Right cardiac atrium (tissue), 5 donors: ENCODE measurements at regions of chr6 and their contacts with region 1.

Region 1: DNA sequence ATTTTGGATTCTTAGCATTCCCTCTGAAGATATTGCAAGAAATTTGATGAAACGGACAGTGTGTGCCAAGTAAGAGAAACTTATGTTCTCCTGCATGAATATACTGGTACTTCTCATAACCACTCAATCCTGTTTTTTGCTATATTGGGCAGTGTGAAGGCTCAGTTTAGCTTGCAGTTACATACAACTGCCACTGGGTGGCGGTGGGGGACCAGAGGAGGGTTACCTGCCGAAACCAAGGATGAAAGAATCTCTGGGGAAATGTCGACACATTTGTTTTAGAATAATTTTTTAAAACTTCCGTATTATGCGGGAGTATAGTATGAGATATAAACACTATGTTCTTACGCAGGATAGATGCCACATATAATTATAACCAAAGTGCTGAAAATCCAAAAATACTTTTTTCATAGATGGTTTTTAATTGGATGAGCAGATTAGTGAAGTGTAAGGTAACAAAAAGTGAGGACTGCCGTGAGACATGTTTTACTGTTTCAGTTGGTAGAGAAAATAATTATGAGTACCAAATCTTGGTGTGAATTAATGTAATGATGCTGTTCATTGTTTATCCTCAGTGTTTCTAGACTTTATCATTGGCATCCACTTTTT is 9.7 kb downstream of the TRMT11 start:
- DNase-seq: peak; percentile 41 to 79 (median 46)
- ATAC-seq: peak; percentile 88 to 91
- H3K4me3 ChIP-seq: no peak overlapping the region
- H3K27ac ChIP-seq: no peak overlapping the region
- H3K4me1 ChIP-seq: no peaks in the 10 kb centered on the region
- H3K27me3 ChIP-seq: no peaks in the 10 kb centered on the region

Region 2: DNA sequence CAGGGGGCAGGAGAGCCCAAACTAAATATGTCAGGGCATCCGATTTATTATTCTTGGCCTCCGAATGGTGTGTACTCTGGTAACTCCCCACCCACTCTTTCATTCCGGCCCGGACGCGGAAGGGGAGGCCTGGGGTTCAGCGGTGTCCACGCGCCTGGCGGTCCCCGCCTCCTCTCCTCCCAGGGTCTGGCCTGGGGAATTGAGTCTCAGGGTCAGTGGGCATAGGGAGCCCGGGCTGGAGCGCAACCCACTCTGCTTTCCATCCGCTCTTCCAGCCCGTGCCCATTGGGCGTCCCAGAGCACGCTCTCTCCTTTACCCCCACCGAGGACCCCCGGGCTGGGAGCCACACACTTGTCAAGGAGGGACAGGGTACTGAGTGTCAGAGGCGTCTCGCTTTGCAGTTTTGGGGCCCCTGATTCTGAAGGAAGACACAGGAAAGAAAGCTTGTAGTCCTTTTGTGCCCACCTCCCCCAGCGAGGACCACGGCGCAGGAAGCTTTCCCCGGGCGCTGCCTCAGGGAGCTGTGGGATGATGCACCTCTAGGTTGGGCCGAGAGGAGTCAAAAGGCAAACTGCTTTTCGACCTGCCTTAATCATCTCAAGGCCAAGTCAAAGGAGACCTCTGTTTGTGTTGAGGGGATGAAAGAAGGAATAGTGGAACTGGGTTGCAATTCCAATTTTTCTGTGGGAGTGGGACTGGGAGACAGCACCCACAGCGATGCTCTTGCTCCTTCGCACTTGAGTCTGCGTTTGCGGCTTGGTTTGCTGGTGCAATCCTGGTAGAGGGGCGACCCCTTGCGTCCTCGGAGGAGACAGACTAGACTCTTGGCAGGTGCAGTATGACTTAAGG is 1124.9 kb after region 1 on chr6:
- intact Hi-C with region 1: loop called in 1 of 4 experiments (anchors 5 kb)
- DNase-seq: peak; percentile 78 to 87 (median 81)
- ATAC-seq: peak; percentile 87 to 88
- H3K4me3 ChIP-seq: peak overlapping the region; percentile 31
- H3K27ac ChIP-seq: no peak overlapping the region
- H3K4me1 ChIP-seq: no peaks in the 10 kb centered on the region
- H3K27me3 ChIP-seq: no peaks in the 10 kb centered on the region